ENCODE measurements at regions of chr9 and their contacts with region 1.

Region 1: DNA sequence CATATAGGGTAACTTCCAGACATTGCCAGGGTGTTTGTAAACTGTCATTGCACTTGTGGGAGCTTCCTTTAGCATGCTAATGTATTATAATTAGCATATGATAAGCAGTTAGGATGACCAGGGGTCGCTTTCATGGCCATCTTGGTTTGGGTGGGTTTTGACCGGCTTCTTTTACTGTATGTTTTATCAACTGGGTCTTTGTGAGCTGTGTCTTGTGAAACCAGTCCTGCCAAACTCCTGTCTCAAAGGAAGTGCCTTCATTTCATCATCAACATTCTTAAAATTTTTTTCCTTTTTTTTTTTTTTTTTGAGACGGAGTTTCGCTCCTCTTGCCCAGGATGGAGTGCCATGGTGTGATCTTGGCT is 11.9 kb upstream of the MELK start:
- DNase-seq: no peak
- H3K4me3 ChIP-seq: no peak overlapping the region
- H3K4me3 Mint-ChIP-seq: no peak overlapping the region
- H3K27ac ChIP-seq: no peak overlapping the region
- H3K27ac Mint-ChIP-seq: no peak overlapping the region
- H3K4me1 ChIP-seq: no peaks in the 10 kb centered on the region
- H3K4me1 Mint-ChIP-seq: peaks cover 0 to 2% (median under 1%) of the 10 kb centered on the region in 4 donors
- H3K27me3 ChIP-seq: no peaks in the 10 kb centered on the region
- H3K27me3 Mint-ChIP-seq: no peaks in the 10 kb centered on the region

Region 2: GRCh38 chr9:36222449-36222848 is 338.4 kb before region 1 on chr9:
- CTCF ChIA-PET with region 1: no interaction called
- POLR2A ChIA-PET with region 1: no interaction called
- intact Hi-C with region 1: no loop called
- DNase-seq: no peak
- H3K4me3 ChIP-seq: no peak overlapping the region
- H3K4me3 Mint-ChIP-seq: no peak overlapping the region
- H3K27ac ChIP-seq: no peak overlapping the region
- H3K27ac Mint-ChIP-seq: peak overlapping the region in 2 of 7 donors; percentile 50 to 57
- H3K4me1 ChIP-seq: peaks cover 14% of the 10 kb centered on the region
- H3K4me1 Mint-ChIP-seq: peaks cover 20 to 29% (median 24%) of the 10 kb centered on the region in 4 donors
- H3K27me3 ChIP-seq: no peaks in the 10 kb centered on the region
- H3K27me3 Mint-ChIP-seq: no peaks in the 10 kb centered on the region

Region 3: GRCh38 chr9:36436909-36437308 is 123.9 kb before region 1 on chr9:
- CTCF ChIA-PET with region 1: interaction called, 19 read pairs
- POLR2A ChIA-PET with region 1: no interaction called
- intact Hi-C with region 1: no loop called
- DNase-seq: no peak
- H3K4me3 ChIP-seq: no peak overlapping the region
- H3K4me3 Mint-ChIP-seq: no peak overlapping the region
- H3K27ac ChIP-seq: no peak overlapping the region
- H3K27ac Mint-ChIP-seq: peak overlapping the region in 2 of 7 donors; percentile 48 to 83
- H3K4me1 ChIP-seq: peaks cover 9% of the 10 kb centered on the region
- H3K4me1 Mint-ChIP-seq: peaks cover 17 to 46% (median 33%) of the 10 kb centered on the region in 4 donors
- H3K27me3 ChIP-seq: no peaks in the 10 kb centered on the region
- H3K27me3 Mint-ChIP-seq: no peaks in the 10 kb centered on the region

Region 4: GRCh38 chr9:36441966-36442365 is 118.9 kb before region 1 on chr9:
- CTCF ChIA-PET with region 1: interaction called, 19 read pairs
- POLR2A ChIA-PET with region 1: no interaction called
- intact Hi-C with region 1: no loop called
- DNase-seq: no peak
- H3K4me3 ChIP-seq: no peak overlapping the region
- H3K4me3 Mint-ChIP-seq: peak overlapping the region in 3 of 8 donors; percentile 2 to 48 (median 26)
- H3K27ac ChIP-seq: no peak overlapping the region
- H3K27ac Mint-ChIP-seq: peak overlapping the region in 1 of 7 donors; percentile 11
- H3K4me1 ChIP-seq: peaks cover 48% of the 10 kb centered on the region
- H3K4me1 Mint-ChIP-seq: peaks cover 43 to 74% (median 53%) of the 10 kb centered on the region in 4 donors
- H3K27me3 ChIP-seq: no peaks in the 10 kb centered on the region
- H3K27me3 Mint-ChIP-seq: no peaks in the 10 kb centered on the region

Region 5: GRCh38 chr9:36450110-36450732 is 110.6 kb before region 1 on chr9:
- CTCF ChIA-PET with region 1: interaction called, 76 read pairs
- POLR2A ChIA-PET with region 1: no interaction called
- intact Hi-C with region 1: loop called (anchors 1 kb)
- DNase-seq: peak in 4 of 5 donors; percentile 24 to 30 (median 29)
- H3K4me3 ChIP-seq: no peak overlapping the region
- H3K4me3 Mint-ChIP-seq: no peak overlapping the region
- H3K27ac ChIP-seq: no peak overlapping the region
- H3K27ac Mint-ChIP-seq: peak overlapping the region in 2 of 7 donors; percentile 12 to 29
- H3K4me1 ChIP-seq: peaks cover 20% of the 10 kb centered on the region
- H3K4me1 Mint-ChIP-seq: peaks cover 16 to 32% (median 25%) of the 10 kb centered on the region in 4 donors
- H3K27me3 ChIP-seq: no peaks in the 10 kb centered on the region
- H3K27me3 Mint-ChIP-seq: no peaks in the 10 kb centered on the region

Region 6: GRCh38 chr9:36461323-36461722 is 99.5 kb before region 1 on chr9:
- CTCF ChIA-PET with region 1: interaction called, 21 read pairs
- POLR2A ChIA-PET with region 1: interaction called, 3 read pairs
- intact Hi-C with region 1: no loop called
- DNase-seq: no peak
- H3K4me3 ChIP-seq: no peak overlapping the region
- H3K4me3 Mint-ChIP-seq: peak overlapping the region in 1 of 8 donors; percentile 28
- H3K27ac ChIP-seq: no peak overlapping the region
- H3K27ac Mint-ChIP-seq: peak overlapping the region; percentile 2 to 64 (median 43)
- H3K4me1 ChIP-seq: peaks cover 29% of the 10 kb centered on the region
- H3K4me1 Mint-ChIP-seq: peaks cover 43 to 68% (median 53%) of the 10 kb centered on the region in 4 donors
- H3K27me3 ChIP-seq: no peaks in the 10 kb centered on the region
- H3K27me3 Mint-ChIP-seq: no peaks in the 10 kb centered on the region